ENCODE measurements at regions of chr14 and their contacts with region 1.

Region 1: DNA sequence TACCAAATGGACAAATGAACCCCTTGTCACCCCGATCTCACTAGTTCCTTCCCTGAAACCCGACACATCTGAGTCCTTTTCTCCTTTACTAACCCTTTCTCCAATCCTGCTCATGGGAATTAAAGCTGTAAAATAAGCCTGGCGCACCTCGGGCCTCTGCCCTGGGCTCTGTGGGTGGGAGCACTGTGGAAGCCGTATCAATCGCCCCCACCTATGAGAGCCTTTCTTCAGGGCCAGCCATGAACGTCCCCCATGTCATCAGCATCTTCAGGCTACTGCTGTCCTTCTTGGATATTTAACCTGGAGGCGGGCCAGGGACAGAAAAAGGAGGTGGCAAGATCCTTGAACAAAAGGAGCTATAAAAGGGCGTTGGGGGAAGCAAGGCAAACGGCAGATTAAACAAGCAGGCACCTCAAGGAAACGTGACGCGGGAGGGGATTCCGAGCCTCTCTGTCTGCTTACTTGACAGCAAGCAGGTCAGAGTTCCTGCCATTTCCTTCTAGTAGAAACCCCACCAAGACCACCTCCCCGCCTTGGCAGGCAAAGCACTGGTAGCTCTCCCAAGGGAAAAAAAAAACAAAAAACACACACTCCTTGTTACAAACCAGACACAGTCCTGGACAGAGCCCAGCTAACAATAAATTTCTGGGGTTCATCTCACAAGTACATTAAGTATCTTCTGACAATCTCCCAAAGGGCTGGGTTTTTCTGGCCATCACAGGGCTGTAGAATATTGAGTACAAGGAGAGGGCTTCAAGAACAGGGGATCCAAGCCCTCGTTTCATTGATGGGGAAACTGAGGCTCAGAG is 62.9 kb downstream of the DPF3 start:
- DNase-seq: peak in 2 of 5 donors; percentile 37 to 39
- ATAC-seq: peak in 1 of 4 donors; percentile 37
- H3K4me3 ChIP-seq: peak overlapping the region in 6 of 12 donors; percentile 4 to 29 (median 20)
- H3K27ac ChIP-seq: peak overlapping the region; percentile 58 to 93 (median 74)
- H3K4me1 ChIP-seq: peaks cover 0 to 51% (median 11%) of the 10 kb centered on the region in 12 donors
- H3K27me3 ChIP-seq: no peaks in the 10 kb centered on the region
- CTCF ChIP-seq: no peak
- POLR2A ChIP-seq: no peak

Region 2: DNA sequence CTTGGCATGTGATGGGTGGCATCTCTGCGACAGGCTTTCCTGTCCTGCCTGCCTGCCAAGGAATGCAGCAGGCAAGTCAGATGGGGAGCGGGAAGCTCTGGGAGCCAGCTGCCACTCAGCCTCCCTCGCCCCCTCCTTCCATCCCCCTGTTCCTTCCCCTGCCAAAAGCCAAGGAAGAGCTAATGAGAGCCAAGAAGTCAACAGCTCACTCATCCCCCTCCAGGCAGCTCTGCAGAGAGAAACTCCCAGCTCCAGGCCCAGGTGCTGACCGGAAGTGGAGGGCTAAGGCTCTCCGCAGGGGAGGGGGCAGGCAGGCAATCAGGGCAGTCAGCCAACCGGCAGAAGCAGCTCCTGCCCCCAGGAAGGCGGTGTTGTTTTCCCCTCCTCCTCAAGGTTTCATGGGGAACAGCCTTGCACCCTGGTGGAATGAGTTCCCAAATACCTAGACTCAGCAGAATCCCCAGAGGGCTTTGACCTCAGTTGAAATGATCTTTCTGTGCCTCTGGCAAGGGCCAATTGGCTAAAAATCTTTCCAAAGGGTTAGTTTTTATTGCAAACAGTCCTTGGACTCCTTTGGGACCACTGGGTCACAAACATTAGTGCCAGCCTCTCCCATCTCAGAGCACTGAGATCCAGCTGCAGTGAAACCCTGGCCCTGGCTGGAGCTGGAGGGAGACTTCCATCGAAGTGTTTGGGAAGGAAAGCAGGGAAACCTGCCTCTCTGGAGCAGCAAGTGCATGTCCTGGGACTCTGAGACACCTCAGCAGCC is 286.2 kb before region 1 on chr14:
- intact Hi-C with region 1: no loop called
- DNase-seq: no peak
- ATAC-seq: peak in 2 of 4 donors; percentile 9 to 15
- H3K4me3 ChIP-seq: no peak overlapping the region
- H3K27ac ChIP-seq: no peak overlapping the region
- H3K4me1 ChIP-seq: peaks cover 0 to 25% (median 12%) of the 10 kb centered on the region in 12 donors
- H3K27me3 ChIP-seq: peaks cover 0 to 2% (median 0%) of the 10 kb centered on the region in 9 donors
- CTCF ChIP-seq: no peak
- POLR2A ChIP-seq: no peak

Region 3: DNA sequence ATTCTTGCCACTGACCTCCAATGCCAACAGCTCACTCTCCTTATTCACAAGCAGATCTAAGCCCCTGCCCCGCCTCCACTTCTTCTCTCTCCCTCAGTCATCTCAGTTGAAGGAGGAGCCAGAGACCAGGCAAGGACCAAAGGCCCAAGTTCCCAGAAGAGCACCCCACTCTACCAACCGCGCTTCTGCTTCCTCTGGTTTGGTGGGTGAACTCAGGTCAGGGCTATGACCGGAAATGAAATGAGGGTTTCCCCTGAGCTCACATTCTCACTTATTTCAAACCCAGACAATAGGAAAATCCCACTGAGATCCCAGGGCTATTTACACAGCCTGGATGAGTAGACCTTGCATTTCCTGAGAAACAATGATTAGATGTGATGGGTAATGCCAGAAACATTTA is 53.0 kb after region 1 on chr14:
- intact Hi-C with region 1: loop called in 1 of 10 experiments (anchors 10 kb)
- DNase-seq: no peak
- ATAC-seq: peak in 1 of 4 donors; percentile 8
- H3K4me3 ChIP-seq: no peak overlapping the region
- H3K27ac ChIP-seq: peak overlapping the region in 5 of 12 donors; percentile 25 to 64 (median 41)
- H3K4me1 ChIP-seq: peaks cover 0 to 59% (median 15%) of the 10 kb centered on the region in 12 donors
- H3K27me3 ChIP-seq: peaks cover 0 to under 1% (median 0%) of the 10 kb centered on the region in 9 donors
- CTCF ChIP-seq: no peak
- POLR2A ChIP-seq: no peak